ENCODE measurements at regions of chr17 and their contacts with region 1.

Region 1: GRCh38 chr17:63714547-63715277 is 14.8 kb upstream of the LIMD2 start:
- DNase-seq: no peak
- H3K4me3 ChIP-seq: no peak overlapping the region
- H3K27me3 ChIP-seq: no peaks in the 10 kb centered on the region
- CTCF ChIP-seq: no peak

Region 2: DNA sequence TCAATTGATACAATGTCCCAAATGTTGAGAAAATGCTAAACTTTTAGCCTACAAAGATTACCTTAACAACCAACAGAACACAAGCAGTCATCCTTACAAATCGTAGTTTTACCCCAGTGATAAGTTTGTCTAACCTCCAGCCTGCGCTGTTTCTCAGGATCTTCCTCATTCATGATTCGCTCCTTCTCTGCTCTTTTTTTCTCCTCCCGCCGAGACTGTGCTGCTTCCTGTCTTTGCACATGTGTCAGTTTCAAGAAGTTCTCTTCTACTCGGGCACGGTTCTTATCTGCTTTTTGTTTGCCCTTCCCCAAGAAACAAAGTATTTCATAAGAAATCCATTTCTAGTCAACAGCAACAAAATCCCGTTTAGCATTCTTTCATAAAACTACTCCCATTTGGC is 37.1 kb after region 1 on chr17:
- CTCF ChIA-PET with region 1: no interaction called
- POLR2A ChIA-PET with region 1: no interaction called
- DNase-seq: no peak
- H3K4me3 ChIP-seq: no peak overlapping the region
- H3K27me3 ChIP-seq: no peaks in the 10 kb centered on the region
- CTCF ChIP-seq: no peak

Region 3: DNA sequence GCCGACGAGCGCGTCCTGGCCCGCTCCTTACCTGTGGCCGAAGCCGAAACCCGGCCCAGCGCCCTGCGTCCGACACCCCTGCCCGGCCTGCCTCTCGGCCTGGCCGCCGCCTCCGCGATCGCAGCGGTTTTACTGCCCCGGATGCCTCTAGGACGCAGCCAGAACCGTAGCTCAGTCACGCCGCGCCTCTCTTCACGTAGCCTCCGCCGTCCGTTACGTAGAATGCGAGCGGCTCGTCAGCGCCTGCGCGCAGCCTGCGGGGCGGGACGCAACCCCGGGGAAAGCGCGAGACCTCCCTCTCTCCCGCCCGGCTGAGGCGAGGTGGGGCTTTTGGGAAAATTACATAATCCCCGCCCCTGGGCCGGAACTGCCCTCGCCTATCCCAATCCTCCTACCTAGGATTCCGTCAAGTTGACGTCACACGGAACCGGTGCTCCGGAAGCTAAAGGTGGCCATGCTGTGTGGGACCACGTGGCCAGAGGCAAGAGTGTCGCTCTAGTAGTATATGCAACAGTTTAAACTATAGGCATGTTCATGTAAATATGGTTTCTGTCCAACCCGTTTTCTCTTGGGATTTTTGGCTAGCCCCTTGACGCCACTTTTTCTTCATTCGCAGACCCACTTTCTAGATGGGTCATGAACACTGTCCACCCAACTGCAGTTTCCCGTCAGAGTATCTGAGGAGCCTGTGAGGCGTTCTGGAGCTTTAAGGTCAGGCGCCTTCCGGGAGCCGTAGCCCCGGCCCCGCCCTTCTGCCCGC is 58.8 kb after region 1 on chr17 and contains the start of gene CCDC47:
- CTCF ChIA-PET with region 1: no interaction called
- POLR2A ChIA-PET with region 1: interaction called, 11 read pairs
- DNase-seq: peak; percentile 94
- H3K4me3 ChIP-seq: peak within 1 kb of the TSS; percentile 83
- H3K27me3 ChIP-seq: no peaks in the 10 kb centered on the region
- CTCF ChIP-seq: no peak
- polyA plus RNA-seq, gene CCDC47: 31.4 and 55.3 TPM in 2 replicates

Region 4: DNA sequence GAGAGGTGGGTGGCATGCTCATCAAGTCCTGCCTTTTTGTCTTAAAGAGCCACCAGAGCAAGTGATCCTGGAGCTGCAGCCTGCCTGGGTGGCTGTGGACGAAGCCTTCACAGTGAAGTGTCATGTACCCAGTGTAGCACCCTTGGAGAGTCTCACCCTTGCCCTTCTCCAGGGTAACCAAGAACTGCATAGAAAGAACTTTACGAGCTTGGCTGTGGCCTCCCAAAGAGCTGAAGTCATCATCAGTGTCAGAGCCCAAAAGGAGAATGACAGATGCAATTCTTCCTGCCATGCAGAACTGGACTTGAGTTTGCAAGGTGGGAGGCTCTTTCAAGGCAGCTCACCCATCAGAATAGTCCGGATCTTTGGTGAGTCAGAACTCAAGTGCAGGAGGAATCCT is 144.5 kb after region 1 on chr17:
- CTCF ChIA-PET with region 1: no interaction called
- POLR2A ChIA-PET with region 1: no interaction called
- DNase-seq: no peak
- H3K4me3 ChIP-seq: no peak overlapping the region
- H3K27me3 ChIP-seq: peaks cover 13% of the 10 kb centered on the region
- CTCF ChIP-seq: no peak

Measured in BJ (cell line).